ENCODE measurements at regions of chr16 and their contacts with region 1.

Region 1: GRCh38 chr16:49407873-49408550 is 34.4 kb downstream of the C16orf78 start:
- DNase-seq: peak; percentile 53
- ATAC-seq: peak; percentile 58
- H3K4me3 ChIP-seq: no peak overlapping the region
- H3K4me3 Mint-ChIP-seq: no peak overlapping the region
- H3K27ac ChIP-seq: no peak overlapping the region
- H3K27ac Mint-ChIP-seq: no peak overlapping the region
- H3K4me1 ChIP-seq: peaks cover 0 to 9% of the 10 kb centered on the region in 2 donors
- H3K4me1 Mint-ChIP-seq: peaks cover 4% of the 10 kb centered on the region
- H3K27me3 ChIP-seq: peaks cover 0 to 10% (median 0%) of the 10 kb centered on the region in 4 experiments
- H3K27me3 Mint-ChIP-seq: peaks cover 30% of the 10 kb centered on the region
- CTCF ChIP-seq: peak; percentile 66

Region 2: GRCh38 chr16:49365711-49366509 is 42.1 kb before region 1 on chr16:
- CTCF ChIA-PET with region 1: no interaction called
- POLR2A ChIA-PET with region 1: no interaction called
- intact Hi-C with region 1: no loop called
- DNase-seq: no peak
- ATAC-seq: no peak
- H3K4me3 ChIP-seq: no peak overlapping the region
- H3K4me3 Mint-ChIP-seq: no peak overlapping the region
- H3K27ac ChIP-seq: no peak overlapping the region
- H3K27ac Mint-ChIP-seq: no peak overlapping the region
- H3K4me1 ChIP-seq: peaks cover 7 to 12% of the 10 kb centered on the region in 2 donors
- H3K4me1 Mint-ChIP-seq: peaks cover 17% of the 10 kb centered on the region
- H3K27me3 ChIP-seq: no peaks in the 10 kb centered on the region
- H3K27me3 Mint-ChIP-seq: peaks cover 7% of the 10 kb centered on the region
- CTCF ChIP-seq: no peak

Region 3: GRCh38 chr16:49592546-49593423 is 184.8 kb after region 1 on chr16:
- CTCF ChIA-PET with region 1: interaction called, 25 read pairs
- POLR2A ChIA-PET with region 1: no interaction called
- intact Hi-C with region 1: no loop called
- DNase-seq: peak; percentile 55
- ATAC-seq: peak; percentile 33
- H3K4me3 ChIP-seq: no peak overlapping the region
- H3K4me3 Mint-ChIP-seq: no peak overlapping the region
- H3K27ac ChIP-seq: no peak overlapping the region
- H3K27ac Mint-ChIP-seq: no peak overlapping the region
- H3K4me1 ChIP-seq: no peaks in the 10 kb centered on the region
- H3K4me1 Mint-ChIP-seq: no peaks in the 10 kb centered on the region
- H3K27me3 ChIP-seq: peaks cover 0 to 7% (median under 1%) of the 10 kb centered on the region in 4 experiments
- H3K27me3 Mint-ChIP-seq: peaks cover 20% of the 10 kb centered on the region
- CTCF ChIP-seq: peak; percentile 72

Measured in B cell (primary cell).